ENCODE measurements at regions of chr12 and their contacts with region 1.

Region 1: GRCh38 chr12:98644711-98645402 is at the starts of genes APAF1 and IKBIP:
- DNase-seq: peak; percentile 98
- H3K4me3 ChIP-seq: peak within 1 kb of the TSS; percentile 98
- H3K27ac ChIP-seq: peak within 1 kb of the TSS; percentile 99
- H3K4me1 ChIP-seq: no peaks in the 10 kb centered on the region
- H3K27me3 ChIP-seq: no peaks in the 10 kb centered on the region
- CTCF ChIP-seq: no peak
- total RNA-seq, gene APAF1: 36.8 to 52.6 TPM
- total RNA-seq, gene IKBIP: 5.0 to 6.8 TPM

Region 2: GRCh38 chr12:98456576-98457573 is 188.0 kb before region 1 on chr12:
- intact Hi-C with region 1: no loop called
- DNase-seq: peak; percentile 20
- H3K4me3 ChIP-seq: peak overlapping the region; percentile 35
- H3K27ac ChIP-seq: no peak overlapping the region
- H3K4me1 ChIP-seq: no peaks in the 10 kb centered on the region
- H3K27me3 ChIP-seq: no peaks in the 10 kb centered on the region
- CTCF ChIP-seq: no peak

Region 3: DNA sequence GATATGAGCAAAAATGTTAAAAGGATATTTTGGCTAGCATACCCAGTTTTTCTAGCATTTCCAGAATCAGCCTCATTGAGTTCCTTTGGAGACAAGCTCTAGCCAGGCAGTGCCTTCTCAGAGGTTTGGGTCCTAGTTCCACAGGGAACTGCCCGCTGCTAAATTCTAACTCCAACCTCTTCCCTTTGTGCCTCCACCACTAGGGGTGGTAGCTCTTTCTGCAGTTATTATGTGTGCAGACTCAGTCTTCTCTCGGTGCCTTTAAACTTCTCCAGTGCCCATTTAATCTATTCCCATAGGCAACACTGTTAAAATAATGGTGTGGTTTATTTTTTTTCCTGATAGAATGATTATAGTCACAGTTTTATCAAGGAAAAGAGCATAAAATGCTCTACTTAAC is 72.8 kb before region 1 on chr12:
- intact Hi-C with region 1: loop called (anchors 5 kb)
- DNase-seq: no peak
- H3K4me3 ChIP-seq: no peak overlapping the region
- H3K27ac ChIP-seq: no peak overlapping the region
- H3K4me1 ChIP-seq: peaks cover 3% of the 10 kb centered on the region
- H3K27me3 ChIP-seq: no peaks in the 10 kb centered on the region
- CTCF ChIP-seq: no peak

Region 4: GRCh38 chr12:98593351-98594049 is 51.4 kb before region 1 on chr12 and contains the start of gene SLC25A3:
- intact Hi-C with region 1: loop called (anchors 2 kb)
- DNase-seq: peak; percentile 95
- H3K4me3 ChIP-seq: peak within 1 kb of the TSS; percentile 79
- H3K27ac ChIP-seq: peak within 1 kb of the TSS; percentile 92
- H3K4me1 ChIP-seq: no peaks in the 10 kb centered on the region
- H3K27me3 ChIP-seq: no peaks in the 10 kb centered on the region
- CTCF ChIP-seq: no peak
- total RNA-seq, gene SLC25A3: 680 to 698 TPM

Measured in colonic mucosa (tissue), 4 donors.